Gastrocnemius medialis (tissue), 4 donors: ENCODE measurements at regions of chr14 and their contacts with region 1.

Region 1: DNA sequence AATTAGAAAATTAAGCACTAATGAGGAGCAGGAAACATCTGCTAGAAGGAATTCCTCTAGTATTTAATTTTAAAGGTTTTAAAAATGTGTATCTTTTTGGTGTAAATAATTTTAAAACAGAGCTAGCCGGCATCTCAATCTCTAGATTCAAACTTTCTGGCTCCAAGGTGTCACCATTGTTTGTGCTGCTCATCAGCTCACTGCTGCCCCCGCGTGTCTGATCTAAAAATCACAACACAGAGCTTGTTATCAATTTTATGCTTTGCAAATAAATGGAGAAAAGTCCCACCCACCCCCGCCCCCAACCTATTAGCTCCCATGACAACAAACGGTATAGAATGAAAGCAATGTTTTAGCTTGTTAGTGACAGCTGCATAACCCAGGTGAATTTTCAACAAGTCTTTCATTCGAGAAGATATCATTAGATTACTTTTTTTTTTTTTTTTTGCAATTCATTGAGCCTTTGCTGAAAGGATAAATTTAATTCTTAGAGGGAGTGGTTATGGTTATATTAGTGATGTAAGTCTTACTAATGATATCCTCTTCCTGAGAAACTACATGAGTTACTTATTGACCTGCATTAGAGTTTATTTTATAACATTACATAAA is 11.3 kb upstream of the ABHD12B start:
- DNase-seq: peak; percentile 42 to 57
- ATAC-seq: peak; percentile 76 to 77
- H3K4me3 ChIP-seq: peak overlapping the region; percentile 59 to 61 (median 60)
- H3K27ac ChIP-seq: peak overlapping the region; percentile 36 to 73 (median 66)
- H3K4me1 ChIP-seq: peaks cover 9 to 10% of the 10 kb centered on the region in 2 donors
- H3K27me3 ChIP-seq: no peaks in the 10 kb centered on the region
- CTCF ChIP-seq: peak; percentile 38 to 84 (median 50)
- POLR2A ChIP-seq: no peak

Region 2: GRCh38 chr14:50599700-50600444 is 260.7 kb before region 1 on chr14:
- in situ Hi-C with region 1: loop called in 2 of 4 experiments (anchors 5 to 10 kb)
- intact Hi-C with region 1: loop called (anchors 10 kb)
- DNase-seq: no peak
- ATAC-seq: peak in 1 of 2 donors; percentile 51
- H3K4me3 ChIP-seq: no peak overlapping the region
- H3K27ac ChIP-seq: no peak overlapping the region
- H3K4me1 ChIP-seq: no peaks in the 10 kb centered on the region
- H3K27me3 ChIP-seq: no peaks in the 10 kb centered on the region
- CTCF ChIP-seq: peak; percentile 29 to 61 (median 53)
- POLR2A ChIP-seq: no peak

Region 3: GRCh38 chr14:50785457-50786063 is 75.0 kb before region 1 on chr14:
- in situ Hi-C with region 1: loop called in 2 of 4 experiments (anchors 10 kb)
- intact Hi-C with region 1: loop called (anchors 5 kb)
- DNase-seq: no peak
- ATAC-seq: no peak
- H3K4me3 ChIP-seq: no peak overlapping the region
- H3K27ac ChIP-seq: no peak overlapping the region
- H3K4me1 ChIP-seq: peaks cover 13 to 24% of the 10 kb centered on the region in 2 donors
- H3K27me3 ChIP-seq: no peaks in the 10 kb centered on the region
- CTCF ChIP-seq: no peak
- POLR2A ChIP-seq: no peak

Region 4: DNA sequence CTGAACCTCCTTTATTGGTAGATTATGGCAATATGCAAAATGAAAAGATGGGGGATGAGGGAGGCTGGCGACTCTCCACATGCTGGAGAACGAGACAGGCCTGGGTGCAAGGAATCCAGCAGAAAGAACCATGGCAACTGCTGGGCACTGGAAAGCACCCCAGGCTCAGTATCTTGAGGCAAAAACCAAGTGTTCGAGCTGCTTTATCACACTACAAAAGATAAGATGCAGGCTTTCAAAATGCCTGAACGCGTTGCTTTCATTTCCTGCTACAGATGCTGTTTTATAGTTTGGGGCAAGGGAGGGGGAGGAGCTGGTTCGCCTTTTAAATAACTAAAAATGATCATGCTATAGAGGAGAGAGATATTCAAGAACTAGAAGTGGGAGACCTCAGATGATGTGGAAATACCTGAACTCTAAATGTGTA is 68.5 kb before region 1 on chr14:
- in situ Hi-C with region 1: loop called in 2 of 4 experiments (anchors 10 kb)
- intact Hi-C with region 1: loop called (anchors 5 kb)
- DNase-seq: no peak
- ATAC-seq: no peak
- H3K4me3 ChIP-seq: peak overlapping the region in 2 of 4 donors; percentile 10 to 43
- H3K27ac ChIP-seq: peak overlapping the region in 3 of 4 donors; percentile 72 to 82 (median 74)
- H3K4me1 ChIP-seq: peaks cover 35 to 43% of the 10 kb centered on the region in 2 donors
- H3K27me3 ChIP-seq: no peaks in the 10 kb centered on the region
- CTCF ChIP-seq: no peak
- POLR2A ChIP-seq: no peak

Region 5: DNA sequence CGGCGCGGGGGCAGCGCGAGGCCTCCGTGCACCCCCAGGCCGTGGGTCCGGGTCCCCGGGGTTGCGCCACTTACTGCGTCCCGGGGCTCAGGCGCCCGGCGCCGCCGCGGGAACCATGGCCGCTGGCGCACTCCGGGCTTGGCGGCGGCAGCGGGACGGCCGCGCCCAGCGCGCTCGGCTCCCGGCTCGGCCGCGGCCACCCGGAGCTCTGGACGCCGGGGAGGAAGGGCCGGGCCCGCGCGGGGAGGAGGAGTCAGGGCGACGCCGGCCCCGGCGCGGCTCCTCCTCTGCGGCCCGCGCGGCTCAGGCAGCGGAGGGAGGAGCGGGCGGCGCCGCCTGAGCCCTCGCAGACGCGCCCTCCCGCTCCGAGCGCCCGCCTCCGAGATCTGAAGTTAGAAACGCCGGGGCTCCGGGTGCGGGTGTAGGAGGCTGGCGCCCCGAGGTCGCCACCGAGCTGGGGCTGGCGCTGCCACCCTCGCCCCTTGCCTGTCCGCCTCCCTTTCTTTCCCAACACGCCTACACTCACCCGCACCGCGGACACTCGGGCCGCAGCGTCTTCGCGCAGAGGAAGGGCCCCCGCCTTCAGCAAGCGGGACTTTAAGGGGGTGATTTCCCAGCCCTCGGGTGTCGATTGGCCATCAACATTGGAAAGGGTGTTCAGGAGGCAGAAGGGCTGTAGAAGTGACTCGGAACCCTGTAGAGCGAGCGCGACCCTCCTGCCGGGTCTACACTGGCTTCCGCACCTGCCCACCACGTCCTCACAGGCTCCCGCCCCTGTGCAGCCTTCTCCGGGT is 29.5 kb before region 1 on chr14 and contains the start of gene NIN:
- in situ Hi-C with region 1: no loop called
- intact Hi-C with region 1: loop called (anchors 2 kb)
- DNase-seq: peak; percentile 33 to 52
- ATAC-seq: peak; percentile 81 to 86
- H3K4me3 ChIP-seq: peak within 1 kb of the TSS; percentile 77 to 94 (median 88)
- H3K27ac ChIP-seq: peak within 1 kb of the TSS; percentile 84 to 92 (median 90)
- H3K4me1 ChIP-seq: peaks cover 25 to 29% of the 10 kb centered on the region in 2 donors
- H3K27me3 ChIP-seq: no peaks in the 10 kb centered on the region
- CTCF ChIP-seq: no peak
- POLR2A ChIP-seq: peak; percentile 65
- total RNA-seq, gene NIN: 16.2 to 49.3 (median 29.2) TPM

Region 6: GRCh38 chr14:50937325-50937724 is 76.7 kb after region 1 on chr14:
- in situ Hi-C with region 1: no loop called
- intact Hi-C with region 1: no loop called
- DNase-seq: no peak
- ATAC-seq: no peak
- H3K4me3 ChIP-seq: no peak overlapping the region
- H3K27ac ChIP-seq: no peak overlapping the region
- H3K4me1 ChIP-seq: no peaks in the 10 kb centered on the region
- H3K27me3 ChIP-seq: no peaks in the 10 kb centered on the region
- CTCF ChIP-seq: no peak
- POLR2A ChIP-seq: no peak